ENCODE measurements at regions of chr10 and their contacts with region 1.

Region 1: GRCh38 chr10:62594093-62594520 is 210.4 kb upstream of the ADO start:
- DNase-seq: peak; percentile 41
- ATAC-seq: peak; percentile 88
- H3K4me3 Mint-ChIP-seq: no peak overlapping the region
- H3K27ac Mint-ChIP-seq: no peak overlapping the region
- H3K4me1 Mint-ChIP-seq: peaks cover 16% of the 10 kb centered on the region
- H3K27me3 Mint-ChIP-seq: no peaks in the 10 kb centered on the region
- CTCF ChIP-seq: peak; percentile 74

Region 2: DNA sequence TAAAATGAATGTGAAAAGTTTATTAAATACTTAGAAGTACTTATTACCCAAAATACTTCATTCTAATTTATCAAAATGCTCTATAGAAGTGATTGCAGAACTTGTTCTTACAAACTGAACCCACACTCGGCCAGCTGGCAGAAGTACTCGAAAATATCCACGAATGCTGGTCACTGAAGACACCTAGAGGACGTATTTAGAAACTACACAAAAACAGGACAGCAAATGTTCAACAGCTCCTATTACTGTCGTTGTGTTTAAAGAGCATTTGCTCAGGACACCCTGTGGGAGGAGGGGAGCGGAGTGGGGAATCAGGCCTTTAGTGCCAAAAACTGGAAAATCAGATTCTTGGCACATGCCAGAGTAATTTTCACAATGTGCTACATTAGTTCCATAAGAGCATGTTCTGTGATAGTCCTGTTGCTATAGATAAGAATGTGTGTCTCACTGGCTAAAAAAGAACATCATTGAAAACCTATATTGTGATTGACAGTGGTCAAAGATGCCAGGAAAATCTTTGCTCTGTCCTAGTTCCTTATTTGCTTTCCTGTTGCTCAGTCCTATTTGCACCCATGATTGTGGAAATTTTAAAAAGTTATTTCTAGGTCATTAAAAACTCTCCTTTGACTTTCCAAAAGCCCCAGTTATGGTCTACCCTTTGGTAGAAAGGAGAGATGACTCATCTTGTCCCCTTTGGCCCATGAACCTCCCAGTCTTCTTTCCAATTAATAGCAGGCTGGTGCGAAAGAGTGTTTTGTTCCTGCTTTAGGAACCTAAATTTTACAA is 490.0 kb after region 1 on chr10:
- CTCF ChIA-PET with region 1: interaction called, 40 read pairs
- POLR2A ChIA-PET with region 1: no interaction called
- intact Hi-C with region 1: loop called (anchors 1 kb)
- DNase-seq: no peak
- ATAC-seq: peak; percentile 77
- H3K4me3 Mint-ChIP-seq: no peak overlapping the region
- H3K27ac Mint-ChIP-seq: no peak overlapping the region
- H3K4me1 Mint-ChIP-seq: no peaks in the 10 kb centered on the region
- H3K27me3 Mint-ChIP-seq: peaks cover 9% of the 10 kb centered on the region
- CTCF ChIP-seq: peak; percentile 53